Posterior vena cava (tissue), 2 donors: ENCODE measurements at regions of chr1 and their contacts with region 1.

Region 1: DNA sequence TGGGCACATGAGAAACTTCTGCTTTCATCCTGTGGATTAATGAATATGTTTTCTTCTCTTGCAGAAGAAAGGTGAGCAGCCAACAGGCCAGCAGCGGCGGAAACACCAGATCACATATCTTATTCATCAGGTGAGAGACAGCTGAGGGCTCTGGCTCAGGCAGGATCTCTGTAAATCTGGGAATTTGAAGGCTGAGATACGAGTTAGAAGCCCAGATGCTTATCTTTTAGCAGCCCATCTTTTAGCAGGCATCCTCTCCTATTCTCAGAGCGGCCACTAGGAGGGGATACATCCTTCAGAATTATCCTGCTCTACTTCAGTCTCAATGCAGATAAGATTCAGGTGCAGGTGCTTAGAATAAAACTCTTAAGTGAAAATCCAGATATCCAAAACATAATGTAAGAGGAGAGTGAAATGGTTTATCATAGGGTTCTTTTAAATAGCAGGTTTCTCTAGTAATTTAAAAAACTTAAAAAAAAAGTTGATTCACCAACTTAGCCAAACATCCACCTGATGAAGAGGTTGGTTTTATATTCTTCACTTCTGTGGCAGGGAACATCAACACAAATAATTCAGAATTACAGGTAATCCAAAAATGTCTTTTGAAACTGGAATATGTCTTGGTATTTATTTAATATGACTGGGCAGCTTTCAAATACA is 19.3 kb downstream of the SH2D2A start:
- DNase-seq: no peak

Region 2: GRCh38 chr1:155717041-155717440 is 1080.3 kb before region 1 on chr1:
- intact Hi-C with region 1: no loop called
- DNase-seq: no peak

Region 3: GRCh38 chr1:156860113-156860627 is 62.8 kb after region 1 on chr1:
- intact Hi-C with region 1: loop called in 1 of 2 experiments (anchors 10 kb)
- DNase-seq: peak; percentile 85